Head of caudate nucleus (tissue), 42 donors: ENCODE measurements at regions of chr22 and their contacts with region 1.

Region 1: GRCh38 chr22:30634471-30635233 is 929 bp upstream of the SLC35E4 start:
- DNase-seq: peak; percentile 77 to 97 (median 93)

Region 2: GRCh38 chr22:30694171-30694639 is 59.6 kb after region 1 on chr22:
- intact Hi-C with region 1: loop called (anchors 2 kb)
- DNase-seq: peak; percentile 47 to 87 (median 73)

Region 3: DNA sequence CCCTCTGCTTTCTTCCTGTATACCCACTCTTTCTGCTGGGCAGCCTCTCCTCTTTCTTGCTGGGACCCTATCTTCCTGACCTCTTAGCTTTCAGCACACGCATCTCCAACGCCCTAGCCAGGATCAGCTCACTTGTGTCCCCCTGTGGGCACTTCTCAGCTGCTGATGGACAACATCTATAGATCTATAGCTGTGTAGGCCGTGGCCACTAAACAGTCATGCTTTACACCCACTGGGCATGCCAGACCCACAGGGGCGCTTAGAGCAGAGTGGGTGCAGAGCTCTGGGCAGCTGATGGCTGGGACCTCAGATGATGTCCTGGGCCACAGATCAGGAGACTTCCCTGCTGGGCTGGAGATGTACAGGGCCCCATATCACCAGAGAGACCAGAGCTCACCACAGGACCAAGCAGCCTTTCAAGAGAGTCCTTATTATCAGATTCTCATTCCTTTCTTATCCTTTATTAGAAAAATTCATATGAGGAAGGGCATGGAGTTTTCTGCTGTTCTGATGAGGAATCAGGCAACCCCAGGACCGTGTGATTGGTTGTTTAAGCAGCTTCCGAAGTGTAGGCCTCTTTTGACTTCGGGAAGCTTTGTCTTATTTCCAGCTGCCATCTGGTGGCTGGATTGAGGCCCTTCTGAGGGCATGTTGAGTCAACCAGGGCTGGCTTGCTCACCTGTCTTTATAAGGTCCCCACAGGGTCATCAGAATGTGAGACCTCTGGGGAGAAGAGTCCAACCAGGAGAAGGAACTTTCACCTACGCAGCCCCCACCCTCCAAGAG is 120.5 kb after region 1 on chr22:
- intact Hi-C with region 1: loop called (anchors 2 kb)
- DNase-seq: peak; percentile 36 to 88 (median 72)